OCI-LY7 (cell line): ENCODE measurements at regions of chr2 and their contacts with region 1.

Region 1: DNA sequence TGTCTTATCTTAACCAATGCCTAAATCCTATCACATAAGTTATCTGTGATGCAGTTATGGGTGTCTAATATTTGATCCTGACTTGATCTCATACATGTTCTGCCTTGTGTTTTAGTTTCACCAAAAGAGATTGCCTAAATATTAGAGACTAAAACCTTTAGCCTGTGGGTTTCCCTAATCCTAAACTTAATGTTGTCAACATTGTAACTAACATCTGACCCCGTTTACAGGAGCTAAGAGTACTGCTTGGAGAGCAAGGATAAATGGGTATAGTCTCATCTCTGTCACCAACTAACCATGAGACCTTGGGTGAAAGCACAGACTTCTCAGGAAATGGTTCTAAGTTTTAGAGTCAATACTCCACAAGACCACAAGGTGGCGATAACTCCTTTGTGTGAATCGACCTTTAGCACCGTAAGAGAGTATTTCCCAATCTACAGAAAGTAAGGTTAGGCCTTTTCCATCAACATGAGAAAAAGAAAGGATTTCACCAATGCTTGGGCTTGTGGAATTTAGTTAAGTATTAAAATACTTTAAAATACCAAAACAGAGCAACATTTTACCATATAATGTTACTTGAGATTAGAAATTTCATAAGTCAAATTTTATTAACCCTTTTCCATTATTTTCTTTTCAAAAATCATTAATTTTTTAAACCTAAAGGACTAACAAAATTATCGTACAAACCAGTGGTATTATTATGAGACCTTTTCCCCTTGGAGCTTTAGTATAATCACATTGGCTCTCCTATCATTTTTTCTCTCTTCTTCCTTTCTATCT is 60.5 kb downstream of the G6PC2 start:
- DNase-seq: peak; percentile 68
- H3K4me3 ChIP-seq: no peak overlapping the region
- H3K27ac ChIP-seq: no peak overlapping the region
- H3K4me1 ChIP-seq: no peaks in the 10 kb centered on the region
- CTCF ChIP-seq: peak; percentile 91

Region 2: DNA sequence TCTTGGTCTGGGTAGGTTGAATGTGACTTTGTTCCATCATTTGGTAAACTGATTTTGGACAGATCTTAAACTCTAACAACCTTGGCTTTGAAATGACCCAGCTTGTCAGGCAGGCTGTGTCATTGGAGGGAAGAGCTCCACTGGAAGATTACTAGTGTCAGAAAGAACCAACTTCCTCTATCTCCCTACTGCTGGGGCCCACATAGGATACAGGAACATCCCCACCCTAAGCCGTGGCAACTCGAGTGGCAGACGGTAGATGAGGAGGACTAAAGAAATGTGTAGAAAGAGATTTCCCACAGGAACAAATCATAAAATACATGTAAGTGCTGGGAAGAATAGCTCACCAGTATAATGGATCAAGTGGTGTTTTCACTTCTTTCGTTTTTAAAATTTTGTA is 64.9 kb before region 1 on chr2:
- CTCF ChIA-PET with region 1: no interaction called
- POLR2A ChIA-PET with region 1: no interaction called
- intact Hi-C with region 1: no loop called
- DNase-seq: no peak
- H3K4me3 ChIP-seq: no peak overlapping the region
- H3K27ac ChIP-seq: no peak overlapping the region
- H3K4me1 ChIP-seq: no peaks in the 10 kb centered on the region
- CTCF ChIP-seq: no peak

Region 3: GRCh38 chr2:169131587-169132512 is 170.2 kb after region 1 on chr2:
- CTCF ChIA-PET with region 1: no interaction called
- POLR2A ChIA-PET with region 1: no interaction called
- intact Hi-C with region 1: loop called (anchors 2 kb)
- DNase-seq: peak; percentile 50
- H3K4me3 ChIP-seq: no peak overlapping the region
- H3K27ac ChIP-seq: no peak overlapping the region
- H3K4me1 ChIP-seq: no peaks in the 10 kb centered on the region
- CTCF ChIP-seq: peak; percentile 88

Region 4: DNA sequence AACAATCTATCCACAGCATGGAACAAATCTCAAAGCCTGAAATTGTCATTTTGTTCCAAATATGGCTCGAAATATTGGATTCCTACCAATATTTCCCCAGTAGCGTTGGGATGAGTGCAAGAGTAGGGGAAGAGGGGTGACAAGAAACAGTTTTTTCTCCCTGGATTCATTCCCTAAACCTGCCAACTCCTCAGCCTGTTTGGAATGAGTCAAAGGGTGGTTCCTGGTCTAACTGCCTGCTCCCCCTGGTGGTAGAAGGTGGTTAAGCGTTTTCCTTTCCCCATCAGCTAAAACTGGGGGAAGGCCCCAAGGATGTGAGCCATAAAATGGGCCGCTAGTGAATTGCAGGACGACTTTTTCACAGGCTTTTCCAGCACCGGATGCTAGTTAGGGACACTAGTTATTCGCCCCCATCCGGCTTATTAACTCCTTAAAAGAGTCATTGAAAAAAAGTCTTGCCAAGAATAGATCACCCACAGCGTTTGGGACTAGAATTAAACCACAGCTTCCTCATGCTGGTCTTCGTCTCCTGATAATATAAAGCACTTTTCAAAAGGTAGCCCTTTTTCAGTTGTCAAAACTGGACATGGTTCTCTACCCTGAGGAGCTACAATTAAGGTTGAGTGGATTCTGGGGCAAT is 180.2 kb after region 1 on chr2:
- CTCF ChIA-PET with region 1: no interaction called
- POLR2A ChIA-PET with region 1: interaction called, 4 read pairs
- intact Hi-C with region 1: loop called (anchors 2 kb)
- DNase-seq: peak; percentile 51
- H3K4me3 ChIP-seq: no peak overlapping the region
- H3K27ac ChIP-seq: no peak overlapping the region
- H3K4me1 ChIP-seq: peaks cover 13% of the 10 kb centered on the region
- CTCF ChIP-seq: peak; percentile 89

Region 5: DNA sequence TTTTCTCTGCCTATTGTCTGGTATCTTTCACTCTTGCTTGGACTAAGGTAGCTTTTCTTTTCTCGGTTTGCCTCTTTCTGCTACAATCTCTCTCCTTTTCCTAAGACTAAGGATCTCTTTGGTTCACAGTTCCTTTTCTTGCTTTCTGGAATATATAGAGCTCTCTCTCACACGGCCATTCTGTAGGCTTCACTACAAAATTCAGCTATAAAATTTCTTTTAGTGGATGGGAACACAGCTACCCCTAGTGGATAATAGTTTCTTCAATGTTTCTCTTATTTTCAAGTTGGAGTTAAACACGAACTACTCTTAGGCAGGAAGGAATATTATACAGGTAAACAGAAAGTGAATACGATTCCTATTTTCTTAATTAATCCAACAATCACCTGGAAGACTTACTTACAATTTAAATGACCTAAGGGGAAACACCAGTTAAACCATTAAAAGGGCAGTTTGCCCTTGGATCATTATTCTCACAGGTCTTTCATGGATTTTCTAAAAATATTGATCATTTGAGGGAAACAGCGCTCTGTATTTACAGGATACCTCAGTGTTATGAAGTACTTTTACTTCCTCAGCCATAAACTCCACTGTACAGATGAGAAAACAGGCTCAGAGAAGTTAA is 260.2 kb after region 1 on chr2:
- CTCF ChIA-PET with region 1: no interaction called
- POLR2A ChIA-PET with region 1: interaction called, 3 read pairs
- intact Hi-C with region 1: loop called (anchors 2 kb)
- DNase-seq: no peak
- H3K4me3 ChIP-seq: no peak overlapping the region
- H3K27ac ChIP-seq: no peak overlapping the region
- H3K4me1 ChIP-seq: no peaks in the 10 kb centered on the region
- CTCF ChIP-seq: peak; percentile 72